Cardiac septum (tissue), 1 donor: ENCODE measurements at regions of chr9 and their contacts with region 1.

Region 1: GRCh38 chr9:20622330-20623020 is at the start of gene MLLT3:
- DNase-seq: peak; percentile 97
- total RNA-seq, gene MLLT3: 13.3 TPM

Region 2: DNA sequence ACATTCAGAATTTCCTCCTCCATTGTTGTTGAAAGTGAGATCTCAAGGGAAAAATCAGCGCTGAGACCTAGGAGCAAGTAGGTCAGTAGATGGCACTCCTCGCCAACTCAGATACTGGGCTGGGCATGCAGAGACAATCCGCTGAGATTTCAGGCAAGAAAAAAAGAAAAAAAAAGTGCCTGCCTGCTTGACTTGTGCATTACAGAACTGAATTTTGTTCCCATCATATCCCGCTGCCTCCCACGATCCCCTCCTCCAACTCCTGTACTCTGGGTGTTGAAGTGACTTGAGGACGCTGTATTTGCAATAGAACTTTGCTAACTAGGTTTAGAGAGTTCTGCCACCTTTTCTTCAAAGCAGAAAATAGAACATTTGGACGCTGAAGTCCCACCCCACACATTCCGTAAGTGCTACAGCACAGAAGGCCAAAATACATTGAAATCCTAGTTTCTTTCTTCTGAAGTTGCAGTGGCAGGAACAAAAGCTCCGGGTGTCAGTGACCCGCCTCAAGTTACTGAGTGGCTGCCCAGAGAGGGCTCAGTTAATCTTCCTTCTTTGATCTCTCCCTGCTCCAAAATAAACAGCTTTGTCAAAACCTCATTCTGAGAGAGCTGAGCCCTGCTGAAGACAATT is 266.0 kb before region 1 on chr9:
- intact Hi-C with region 1: loop called (anchors 2 kb)
- DNase-seq: no peak

Region 3: DNA sequence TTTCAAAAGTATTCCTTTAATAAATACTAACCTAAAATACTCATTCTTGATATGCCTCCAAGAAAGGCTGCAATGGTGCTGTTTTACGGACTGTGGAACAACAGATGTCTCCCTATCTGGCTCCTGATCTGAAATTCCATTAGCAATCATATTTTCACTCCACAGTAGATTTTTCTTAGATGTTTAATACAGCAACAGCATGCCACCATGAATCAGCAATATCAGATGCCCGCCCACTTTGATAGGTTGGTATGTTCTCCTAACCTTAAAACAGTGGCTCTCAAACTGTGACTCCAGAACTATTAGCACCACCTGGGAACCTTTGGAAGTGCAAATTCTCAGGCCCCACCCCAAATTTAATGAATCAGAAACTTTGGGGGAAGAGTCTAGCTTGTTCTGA is 110.4 kb before region 1 on chr9:
- intact Hi-C with region 1: loop called (anchors 2 kb)
- DNase-seq: no peak

Region 4: DNA sequence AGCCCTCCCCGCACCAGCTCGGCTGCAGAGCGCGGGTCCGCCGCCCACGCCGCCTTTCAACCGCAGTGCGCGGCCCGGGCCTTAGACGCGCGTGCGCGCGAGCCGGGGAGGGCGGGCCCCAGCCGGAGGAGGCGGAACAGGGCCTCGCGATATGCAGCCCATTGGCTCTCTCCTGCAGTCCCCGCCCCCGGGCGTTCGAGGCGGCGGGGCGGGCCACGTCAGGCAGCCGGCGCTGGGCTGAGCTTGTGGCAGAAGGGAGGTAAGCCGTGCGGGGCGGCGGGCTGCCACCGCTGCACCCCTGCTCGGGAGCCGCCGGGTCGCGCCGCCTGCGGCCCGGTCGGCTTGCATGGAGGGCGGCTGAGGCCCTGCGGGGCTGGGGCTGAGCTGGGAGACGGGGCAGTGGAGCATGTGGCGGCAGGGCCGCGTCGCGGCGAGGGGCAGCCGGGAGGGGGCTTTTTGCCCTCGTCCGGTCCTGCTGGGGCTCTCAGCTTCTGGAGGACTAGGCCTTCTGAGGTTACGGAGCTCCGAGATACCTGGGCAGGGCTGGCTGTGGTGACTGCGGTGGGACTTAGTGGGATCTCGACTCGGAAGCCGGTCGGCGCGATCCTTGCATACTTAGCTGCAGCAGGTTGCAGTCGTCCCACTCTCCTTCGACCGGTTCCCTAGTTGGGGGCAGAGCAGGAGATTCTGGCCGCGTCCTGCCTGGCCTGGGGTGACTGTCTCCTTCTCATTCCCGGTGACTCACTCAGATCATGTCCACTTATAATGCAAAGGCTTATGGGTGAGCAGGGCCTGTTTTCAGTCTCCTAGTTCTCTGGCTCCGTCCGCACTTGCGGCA is 61.8 kb after region 1 on chr9 and contains the start of gene FOCAD:
- intact Hi-C with region 1: loop called (anchors 1 kb)
- DNase-seq: peak; percentile 99
- total RNA-seq, gene FOCAD: 38.3 TPM

Region 5: GRCh38 chr9:21110708-21111576 is 488.5 kb after region 1 on chr9:
- intact Hi-C with region 1: loop called (anchors 10 kb)
- DNase-seq: no peak